H1 (cell line): ENCODE measurements at regions of chr18 and their contacts with region 1.

Region 1: GRCh38 chr18:59966913-59967312 is 67.1 kb downstream of the PMAIP1 start:
- DNase-seq: no peak
- H3K4me3 ChIP-seq: no peak overlapping the region
- H3K27ac ChIP-seq: no peak overlapping the region
- H3K4me1 ChIP-seq: no peaks in the 10 kb centered on the region
- H3K27me3 ChIP-seq: no peaks in the 10 kb centered on the region
- CTCF ChIP-seq: no peak
- EP300 ChIP-seq: no peak
- POLR2A ChIP-seq: no peak
- RAD21 ChIP-seq: no peak

Region 2: DNA sequence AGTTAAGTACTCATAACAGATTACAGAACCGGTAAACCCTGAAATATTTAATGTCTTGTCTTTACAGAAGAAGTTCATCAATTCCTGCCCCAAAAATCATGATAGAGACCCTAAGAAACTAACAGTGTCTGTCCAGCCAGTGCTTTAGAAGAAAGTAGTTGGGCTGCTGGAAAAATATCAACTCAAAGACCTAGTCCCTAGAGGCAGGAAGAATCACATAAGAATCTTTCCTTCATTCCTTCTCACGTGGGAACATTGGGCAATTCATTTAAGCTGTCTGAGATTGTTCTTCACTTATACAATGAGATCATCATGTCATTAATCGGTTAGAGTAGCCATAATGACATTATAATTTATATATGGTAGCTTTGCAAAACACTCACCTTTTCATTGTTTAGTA is 426.1 kb before region 1 on chr18:
- CTCF ChIA-PET with region 1: no interaction called
- POLR2A ChIA-PET with region 1: no interaction called
- DNase-seq: no peak
- H3K4me3 ChIP-seq: no peak overlapping the region
- H3K27ac ChIP-seq: no peak overlapping the region
- H3K4me1 ChIP-seq: no peaks in the 10 kb centered on the region; a peak in 1 of 7 replicates
- H3K27me3 ChIP-seq: no peaks in the 10 kb centered on the region
- CTCF ChIP-seq: no peak
- EP300 ChIP-seq: no peak
- POLR2A ChIP-seq: no peak
- RAD21 ChIP-seq: no peak

Region 3: GRCh38 chr18:59718108-59718463 is 248.8 kb before region 1 on chr18:
- CTCF ChIA-PET with region 1: no interaction called
- POLR2A ChIA-PET with region 1: no interaction called
- DNase-seq: no peak
- H3K4me3 ChIP-seq: no peak overlapping the region
- H3K27ac ChIP-seq: no peak overlapping the region
- H3K4me1 ChIP-seq: peaks cover 0 to 3% (median 0%) of the 10 kb centered on the region in 4 experiments; a peak in 2 of 7 replicates
- H3K27me3 ChIP-seq: no peaks in the 10 kb centered on the region
- CTCF ChIP-seq: no peak
- EP300 ChIP-seq: no peak
- POLR2A ChIP-seq: no peak
- RAD21 ChIP-seq: no peak

Region 4: DNA sequence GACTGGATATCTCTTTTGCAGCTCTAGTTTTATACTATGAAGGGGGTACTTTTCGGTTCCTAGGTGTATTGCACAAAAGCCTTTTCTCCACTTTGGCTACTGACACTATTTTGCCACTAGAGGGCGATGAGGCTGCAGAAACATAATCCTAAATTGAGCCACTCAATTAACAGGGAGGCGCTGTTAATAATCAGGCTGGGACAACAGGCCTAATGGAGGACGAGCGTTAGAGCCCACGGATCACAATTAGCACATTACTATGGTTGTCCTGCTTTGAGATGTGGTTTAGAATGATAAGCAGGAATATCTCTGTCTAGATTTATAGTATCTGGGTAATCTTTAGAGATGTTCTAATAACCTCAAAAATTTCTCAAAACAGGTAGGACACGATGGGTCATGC is 129.3 kb before region 1 on chr18:
- CTCF ChIA-PET with region 1: interaction called, 11 read pairs
- POLR2A ChIA-PET with region 1: no interaction called
- DNase-seq: peak in 1 of 2 experiments; percentile 36
- H3K4me3 ChIP-seq: no peak overlapping the region
- H3K27ac ChIP-seq: no peak overlapping the region
- H3K4me1 ChIP-seq: peaks cover 0 to 15% (median 7%) of the 10 kb centered on the region in 4 experiments; a peak in 5 of 7 replicates
- H3K27me3 ChIP-seq: no peaks in the 10 kb centered on the region
- CTCF ChIP-seq: peak in 2 of 3 experiments; percentile 85 to 90; a peak in 3 of 4 replicates
- EP300 ChIP-seq: 0 out of 3 replicates have a peak, but pooled peaks of 1 of the 2 experiments have one; percentile 45
- POLR2A ChIP-seq: no peak
- RAD21 ChIP-seq: peak; percentile 86 to 93

Region 5: GRCh38 chr18:60007661-60008060 is 40.7 kb after region 1 on chr18:
- CTCF ChIA-PET with region 1: no interaction called
- POLR2A ChIA-PET with region 1: no interaction called
- DNase-seq: no peak
- H3K4me3 ChIP-seq: no peak overlapping the region
- H3K27ac ChIP-seq: no peak overlapping the region
- H3K4me1 ChIP-seq: peaks cover 0 to 2% (median 0%) of the 10 kb centered on the region in 4 experiments; a peak in 1 of 7 replicates
- H3K27me3 ChIP-seq: no peaks in the 10 kb centered on the region
- CTCF ChIP-seq: no peak
- EP300 ChIP-seq: no peak
- POLR2A ChIP-seq: no peak
- RAD21 ChIP-seq: no peak